PC-9 (cell line): ENCODE measurements at regions of chr3 and their contacts with region 1.

Region 1: DNA sequence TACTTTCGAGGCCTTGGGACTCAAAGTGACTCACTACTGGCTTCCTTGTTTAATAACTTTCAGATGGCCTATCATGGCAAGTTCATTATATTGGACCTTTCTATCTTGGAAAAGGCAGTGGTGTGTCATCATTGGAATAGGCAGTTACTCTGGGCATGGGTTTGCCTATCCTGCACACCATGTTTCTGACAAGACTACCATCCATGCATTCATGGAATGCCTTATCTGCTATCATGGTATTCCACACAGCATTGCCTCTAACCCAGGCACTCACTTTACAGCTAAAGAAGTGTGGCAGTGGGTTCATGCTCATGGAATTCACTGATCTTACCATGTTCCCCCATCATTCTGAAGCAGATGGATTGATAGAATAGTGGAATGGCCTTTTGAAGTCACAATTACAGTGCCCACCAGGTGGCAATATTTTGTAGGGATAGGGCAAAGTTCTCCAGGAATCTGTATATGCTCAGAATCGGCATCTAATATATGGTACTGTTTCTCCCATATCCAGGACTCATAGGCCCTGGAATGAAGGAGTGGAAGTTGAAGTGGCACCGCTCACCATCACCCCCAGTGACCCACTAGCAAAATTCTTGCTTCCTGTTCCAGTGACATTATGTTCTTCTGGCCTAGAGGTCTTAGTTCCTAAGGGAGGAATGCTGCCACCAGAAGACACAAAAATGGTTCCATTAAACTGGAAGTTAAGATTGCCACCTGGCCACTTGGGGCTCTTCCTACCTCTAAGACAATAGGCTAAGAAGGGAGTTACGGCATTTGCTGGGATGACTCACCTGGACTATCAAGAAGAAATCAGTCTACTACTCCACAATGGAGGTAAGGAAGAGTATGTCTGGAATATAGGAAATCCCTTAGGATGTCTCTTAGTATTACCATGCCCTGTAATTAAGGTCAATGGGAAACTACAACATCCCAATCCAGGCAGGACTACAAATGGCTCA is 1161.4 kb downstream of the SI start:
- DNase-seq: no peak
- H3K4me3 ChIP-seq: no peak overlapping the region
- H3K27ac ChIP-seq: no peak overlapping the region
- H3K4me1 ChIP-seq: no peaks in the 10 kb centered on the region
- H3K27me3 ChIP-seq: no peaks in the 10 kb centered on the region
- CTCF ChIP-seq: peak; percentile 43; the same call in 1 of the 2 replicates

Region 2: GRCh38 chr3:163929069-163929652 is 12.3 kb after region 1 on chr3:
- CTCF ChIA-PET with region 1: no interaction called
- POLR2A ChIA-PET with region 1: no interaction called
- intact Hi-C with region 1: no loop called
- DNase-seq: no peak
- H3K4me3 ChIP-seq: no peak overlapping the region
- H3K27ac ChIP-seq: no peak overlapping the region
- H3K4me1 ChIP-seq: no peaks in the 10 kb centered on the region
- H3K27me3 ChIP-seq: no peaks in the 10 kb centered on the region
- CTCF ChIP-seq: no peak

Region 3: DNA sequence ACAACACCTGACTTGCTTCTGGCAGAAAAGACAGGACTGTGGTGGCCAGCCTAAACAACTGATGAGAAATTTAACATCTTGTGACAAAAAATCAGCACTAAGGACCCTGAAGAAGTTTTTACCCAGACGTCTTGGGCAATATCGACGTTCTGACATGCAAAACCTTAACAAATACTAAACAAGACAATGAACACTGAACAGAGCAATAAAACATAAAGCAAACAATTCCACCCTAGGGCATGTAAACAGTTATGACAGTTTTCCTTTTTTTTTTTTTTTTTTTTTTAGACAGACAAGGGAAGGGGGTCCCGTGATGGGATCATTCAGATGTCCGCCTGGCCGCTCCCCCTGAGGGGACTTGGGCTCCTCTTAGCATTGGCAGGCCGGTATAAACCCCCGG is 423.4 kb after region 1 on chr3:
- CTCF ChIA-PET with region 1: no interaction called
- POLR2A ChIA-PET with region 1: no interaction called
- intact Hi-C with region 1: no loop called
- DNase-seq: no peak
- H3K4me3 ChIP-seq: no peak overlapping the region
- H3K27ac ChIP-seq: no peak overlapping the region
- H3K4me1 ChIP-seq: no peaks in the 10 kb centered on the region
- H3K27me3 ChIP-seq: no peaks in the 10 kb centered on the region
- CTCF ChIP-seq: no peak

Region 4: GRCh38 chr3:164465172-164465571 is 548.3 kb after region 1 on chr3:
- CTCF ChIA-PET with region 1: no interaction called
- POLR2A ChIA-PET with region 1: no interaction called
- intact Hi-C with region 1: no loop called
- DNase-seq: no peak
- H3K4me3 ChIP-seq: no peak overlapping the region
- H3K27ac ChIP-seq: no peak overlapping the region
- H3K4me1 ChIP-seq: no peaks in the 10 kb centered on the region
- H3K27me3 ChIP-seq: no peaks in the 10 kb centered on the region
- CTCF ChIP-seq: no peak

Region 5: DNA sequence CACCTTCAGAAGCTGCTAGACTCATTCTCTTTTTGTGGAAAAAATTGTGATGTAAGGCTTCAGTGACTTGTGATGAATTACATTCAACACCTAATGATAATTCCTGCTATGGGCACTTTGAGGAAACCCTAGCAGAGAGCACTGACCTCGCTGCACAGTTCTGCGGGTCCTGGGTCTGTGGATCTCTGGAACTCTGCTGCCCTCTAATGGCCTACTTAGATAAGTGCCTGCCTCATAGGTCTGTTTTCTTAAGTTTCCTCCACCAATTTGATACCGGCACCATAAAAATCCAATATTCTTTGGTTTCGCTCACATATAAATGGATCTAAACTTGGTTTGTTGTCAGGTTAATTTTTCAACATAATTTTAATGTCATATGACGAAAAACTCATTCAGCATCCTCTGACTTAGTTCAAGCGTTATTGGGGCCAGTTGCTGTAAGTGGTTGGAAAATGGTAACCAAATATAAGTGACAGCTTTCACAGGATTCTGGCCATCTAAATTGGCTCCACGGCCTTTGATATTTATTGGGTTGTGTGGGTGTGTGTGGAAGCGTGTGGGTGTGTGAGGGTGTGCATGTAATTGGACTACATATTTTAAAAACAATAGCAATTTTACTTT is 1268.9 kb after region 1 on chr3:
- CTCF ChIA-PET with region 1: no interaction called
- POLR2A ChIA-PET with region 1: no interaction called
- intact Hi-C with region 1: loop called (anchors 1 kb)
- DNase-seq: peak; percentile 41 to 55
- H3K4me3 ChIP-seq: no peak overlapping the region
- H3K27ac ChIP-seq: no peak overlapping the region
- H3K4me1 ChIP-seq: no peaks in the 10 kb centered on the region
- H3K27me3 ChIP-seq: no peaks in the 10 kb centered on the region
- CTCF ChIP-seq: peak; percentile 94